Right lobe of liver (tissue), 6 donors: ENCODE measurements at regions of chr2 and their contacts with region 1.

Region 1: DNA sequence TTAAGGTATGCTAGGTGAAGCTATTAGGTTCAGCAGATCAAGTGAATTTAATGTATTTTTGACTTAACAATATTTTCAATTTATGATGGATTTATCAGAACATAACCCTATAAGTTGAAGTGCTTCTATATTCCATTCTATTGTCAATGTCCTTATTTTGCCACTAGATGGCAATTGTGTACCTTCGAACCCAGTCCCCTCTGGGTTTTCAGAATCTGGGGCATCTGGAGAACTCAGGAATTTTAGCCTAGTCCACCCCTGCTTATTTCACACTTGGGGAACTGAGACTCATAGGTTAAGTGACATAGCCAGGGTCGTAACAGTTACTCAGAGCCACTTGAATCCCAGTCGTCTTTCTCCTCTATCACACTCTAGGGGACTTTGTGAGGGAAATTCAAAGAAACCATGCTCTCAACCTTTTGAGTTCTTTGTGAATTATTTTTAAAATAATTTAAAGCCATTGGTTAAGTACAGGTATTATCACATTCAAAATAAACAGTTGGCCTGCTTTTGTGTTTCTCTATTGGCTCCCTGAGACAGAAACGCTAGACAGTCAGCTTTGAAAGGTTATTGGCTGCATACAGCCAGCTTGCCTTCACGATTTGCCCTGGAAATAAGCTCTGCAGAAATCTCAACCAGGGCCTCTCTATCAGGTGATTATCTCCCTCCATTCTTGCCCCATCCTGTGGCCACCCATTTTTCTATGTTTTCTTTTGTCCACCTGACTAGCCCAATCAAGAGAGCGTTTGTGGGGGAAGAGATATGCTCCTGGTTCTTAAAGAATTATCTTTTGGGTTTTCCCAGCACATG is 145.0 kb downstream of the TTC27 start:
- DNase-seq: no peak
- ATAC-seq: peak; percentile 74 to 83 (median 78)
- H3K4me3 ChIP-seq: no peak overlapping the region
- H3K27ac ChIP-seq: no peak overlapping the region
- H3K4me1 ChIP-seq: no peaks in the 10 kb centered on the region
- H3K27me3 ChIP-seq: no peaks in the 10 kb centered on the region
- CTCF ChIP-seq: peak; percentile 60 to 71 (median 66)
- POLR2A ChIP-seq: no peak

Region 2: GRCh38 chr2:32611366-32611765 is 161.5 kb before region 1 on chr2:
- intact Hi-C with region 1: no loop called
- DNase-seq: no peak
- ATAC-seq: peak in 3 of 4 donors; percentile 45 to 70 (median 58)
- H3K4me3 ChIP-seq: no peak overlapping the region
- H3K27ac ChIP-seq: no peak overlapping the region
- H3K4me1 ChIP-seq: no peaks in the 10 kb centered on the region
- H3K27me3 ChIP-seq: no peaks in the 10 kb centered on the region
- CTCF ChIP-seq: no peak
- POLR2A ChIP-seq: no peak

Region 3: DNA sequence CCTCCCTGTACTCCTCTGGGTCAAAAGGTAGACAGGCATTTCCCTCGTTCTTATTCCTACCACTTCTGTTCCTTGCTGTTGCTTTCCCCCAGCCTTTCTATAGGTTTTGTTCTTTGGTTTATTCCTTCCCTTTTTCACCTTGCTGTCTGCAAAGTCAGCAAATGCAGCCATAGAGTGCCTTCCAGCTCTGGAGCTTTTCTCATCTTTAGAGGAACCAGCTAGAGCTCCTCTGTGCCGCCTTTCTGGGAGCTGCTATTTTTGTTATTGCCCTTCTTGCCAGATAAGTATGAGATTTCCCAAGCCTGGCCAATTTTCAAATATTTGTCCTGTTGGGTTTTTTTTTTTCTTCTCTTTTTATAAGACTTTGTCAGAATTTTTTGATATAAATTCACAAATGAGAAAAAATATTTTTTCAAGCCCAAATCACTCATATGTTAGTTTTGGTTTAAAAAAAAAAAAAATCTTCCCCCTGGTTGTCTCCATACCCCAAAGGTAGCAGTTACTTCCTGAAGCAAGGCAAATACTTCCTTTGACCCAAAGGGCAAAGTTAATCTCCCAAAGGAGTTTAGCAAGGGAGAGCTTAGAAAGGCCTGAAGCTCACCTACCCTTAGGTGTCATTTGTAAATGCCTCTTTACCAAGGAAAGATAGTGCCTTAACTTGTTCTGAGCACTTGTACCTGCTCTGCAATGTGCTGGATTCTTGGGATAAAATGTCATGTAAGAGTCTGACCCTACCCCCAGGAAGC is 150.1 kb before region 1 on chr2:
- intact Hi-C with region 1: no loop called
- DNase-seq: no peak
- ATAC-seq: peak in 3 of 4 donors; percentile 7 to 12 (median 11)
- H3K4me3 ChIP-seq: no peak overlapping the region
- H3K27ac ChIP-seq: no peak overlapping the region
- H3K4me1 ChIP-seq: peaks cover 0 to 7% (median 3%) of the 10 kb centered on the region in 4 donors
- H3K27me3 ChIP-seq: no peaks in the 10 kb centered on the region
- CTCF ChIP-seq: no peak
- POLR2A ChIP-seq: no peak

Region 4: DNA sequence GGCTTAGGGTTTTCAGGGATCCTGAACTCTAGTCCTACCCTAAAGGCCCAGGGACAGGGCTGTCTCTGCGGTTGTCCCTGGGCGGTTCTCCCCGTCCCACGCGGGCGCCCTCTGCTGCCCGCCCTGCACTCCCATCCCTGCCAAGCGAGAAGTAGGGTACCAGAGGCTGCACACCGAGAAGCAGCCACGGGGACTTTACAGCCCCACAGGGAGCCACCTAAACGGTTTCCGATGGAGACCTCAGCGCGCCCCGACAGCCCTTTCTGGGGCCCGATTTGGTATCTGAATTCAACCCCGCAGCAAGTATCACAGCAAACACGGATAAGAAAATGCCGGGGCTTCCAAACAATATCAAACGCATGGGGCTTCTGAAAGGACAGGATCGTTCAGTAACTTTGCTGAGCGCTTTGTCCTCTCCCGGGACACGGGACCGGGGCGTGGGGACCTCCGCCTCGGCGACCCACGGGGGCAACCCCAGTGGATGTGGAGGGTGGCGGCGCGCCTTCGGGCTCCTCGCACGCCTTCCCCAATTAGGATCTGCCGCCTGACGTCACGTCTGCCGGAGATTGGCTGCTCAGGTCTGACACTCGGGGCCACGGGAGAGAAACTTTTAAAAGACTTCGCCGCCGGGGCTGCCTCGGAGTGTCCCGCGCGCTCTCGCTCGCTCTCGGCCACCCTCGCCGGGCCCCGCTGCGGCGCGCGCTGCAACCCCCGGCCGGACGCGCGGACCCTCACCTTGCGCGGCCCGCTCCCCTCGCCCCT is 173.7 kb after region 1 on chr2 and contains the start of gene LTBP1:
- intact Hi-C with region 1: loop called in 1 of 2 experiments (anchors 10 kb)
- DNase-seq: peak; percentile 75 to 83 (median 78)
- ATAC-seq: peak; percentile 94 to 98 (median 96)
- H3K4me3 ChIP-seq: peak within 1 kb of the TSS; percentile 67 to 72 (median 69)
- H3K27ac ChIP-seq: peak within 1 kb of the TSS; percentile 24 to 62 (median 30)
- H3K4me1 ChIP-seq: no peaks in the 10 kb centered on the region
- H3K27me3 ChIP-seq: no peaks in the 10 kb centered on the region
- CTCF ChIP-seq: peak; percentile 46 to 88 (median 84)
- POLR2A ChIP-seq: no peak
- total RNA-seq, gene LTBP1: 5.4 to 14.2 (median 9.1) TPM